Breast epithelium (tissue), 4 donors: ENCODE measurements at regions of chr3 and their contacts with region 1.

Region 1: DNA sequence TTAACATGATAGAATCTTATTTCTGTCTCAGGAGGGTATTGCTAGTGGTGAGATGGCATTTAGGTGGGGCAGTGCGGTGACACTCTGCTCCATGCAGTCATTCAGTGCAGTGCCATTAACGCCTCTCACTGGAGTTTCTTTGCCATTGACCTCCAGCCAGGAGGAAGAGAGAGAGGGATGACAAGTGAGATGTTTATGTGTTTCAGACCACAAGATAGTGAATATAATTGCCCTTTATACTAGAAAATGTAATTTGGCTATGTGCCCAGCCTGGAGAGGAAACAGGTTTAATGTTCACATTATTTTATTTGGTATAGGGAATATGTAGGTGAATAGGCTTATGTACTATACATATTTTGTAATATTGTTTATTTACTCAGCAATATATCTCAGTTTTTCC is 84.5 kb downstream of the ZIC1 start:
- DNase-seq: no peak
- H3K4me3 ChIP-seq: no peak overlapping the region
- H3K27ac ChIP-seq: no peak overlapping the region
- H3K4me1 ChIP-seq: no peaks in the 10 kb centered on the region
- H3K27me3 ChIP-seq: no peaks in the 10 kb centered on the region
- CTCF ChIP-seq: no peak
- POLR2A ChIP-seq: no peak

Region 2: GRCh38 chr3:147472846-147473245 is 20.8 kb before region 1 on chr3:
- intact Hi-C with region 1: no loop called
- DNase-seq: no peak
- H3K4me3 ChIP-seq: no peak overlapping the region
- H3K27ac ChIP-seq: no peak overlapping the region
- H3K4me1 ChIP-seq: no peaks in the 10 kb centered on the region
- H3K27me3 ChIP-seq: no peaks in the 10 kb centered on the region
- CTCF ChIP-seq: no peak
- POLR2A ChIP-seq: no peak

Region 3: DNA sequence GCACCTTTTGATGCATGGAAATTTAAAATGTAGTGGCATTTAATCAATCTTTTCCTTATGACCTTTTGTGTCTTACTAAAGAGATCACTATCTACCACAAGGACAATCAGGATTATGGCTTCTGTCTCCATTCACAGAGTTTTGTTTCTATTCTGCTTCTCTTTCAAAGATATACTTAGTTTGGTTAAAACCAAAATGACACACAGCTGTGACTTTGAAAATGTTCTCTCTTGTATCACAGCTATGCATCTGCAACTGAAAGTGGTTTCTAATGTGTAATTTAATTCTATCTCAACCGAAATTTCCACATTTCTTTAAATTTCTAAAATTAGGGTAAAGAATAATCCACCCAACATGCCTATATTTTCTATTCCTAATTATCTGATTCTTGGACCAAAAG is 1564.9 kb after region 1 on chr3:
- intact Hi-C with region 1: loop called (anchors 10 kb)
- DNase-seq: no peak
- H3K4me3 ChIP-seq: no peak overlapping the region
- H3K27ac ChIP-seq: no peak overlapping the region
- H3K4me1 ChIP-seq: no peaks in the 10 kb centered on the region
- H3K27me3 ChIP-seq: no peaks in the 10 kb centered on the region
- CTCF ChIP-seq: no peak
- POLR2A ChIP-seq: no peak